Stomach (tissue), 19 donors: ENCODE measurements at regions of chrX and their contacts with region 1.

Region 1: GRCh38 chrX:46561824-46562657 is 11.5 kb upstream of the CHST7 start:
- DNase-seq: peak; percentile 15 to 41
- H3K4me3 ChIP-seq: no peak overlapping the region
- H3K27ac ChIP-seq: no peak overlapping the region
- H3K4me1 ChIP-seq: no peaks in the 10 kb centered on the region
- H3K27me3 ChIP-seq: no peaks in the 10 kb centered on the region
- CTCF ChIP-seq: no peak
- EP300 ChIP-seq: no peak
- POLR2A ChIP-seq: no peak

Region 2: DNA sequence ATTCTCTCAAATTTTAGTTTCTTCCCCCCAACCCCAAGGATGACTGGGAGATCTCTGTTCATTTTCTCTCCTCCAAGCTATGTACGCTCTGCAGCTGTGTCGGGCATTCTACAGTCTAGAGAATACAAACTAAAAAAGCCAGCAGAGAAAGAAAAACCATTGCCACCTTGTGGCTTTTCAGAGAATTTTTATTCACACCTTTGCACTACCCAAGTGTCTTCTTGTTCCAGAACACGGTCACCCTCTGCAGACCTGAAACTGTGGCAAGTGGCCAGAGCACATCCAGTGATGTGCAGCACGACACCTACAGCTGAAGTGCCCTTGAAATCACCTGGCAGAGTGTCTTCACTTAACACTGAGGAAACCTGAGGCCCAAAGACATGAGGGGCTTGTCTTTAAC is 80.1 kb after region 1 on chrX:
- intact Hi-C with region 1: loop called (anchors 10 kb)
- DNase-seq: peak in 1 of 2 donors; percentile 34
- H3K4me3 ChIP-seq: no peak overlapping the region
- H3K27ac ChIP-seq: no peak overlapping the region
- H3K4me1 ChIP-seq: no peaks in the 10 kb centered on the region
- H3K27me3 ChIP-seq: peaks cover 0 to 1% (median 0%) of the 10 kb centered on the region in 3 donors
- CTCF ChIP-seq: peak in 4 of 7 experiments; percentile 12 to 31 (median 21)
- EP300 ChIP-seq: no peak
- POLR2A ChIP-seq: no peak

Region 3: DNA sequence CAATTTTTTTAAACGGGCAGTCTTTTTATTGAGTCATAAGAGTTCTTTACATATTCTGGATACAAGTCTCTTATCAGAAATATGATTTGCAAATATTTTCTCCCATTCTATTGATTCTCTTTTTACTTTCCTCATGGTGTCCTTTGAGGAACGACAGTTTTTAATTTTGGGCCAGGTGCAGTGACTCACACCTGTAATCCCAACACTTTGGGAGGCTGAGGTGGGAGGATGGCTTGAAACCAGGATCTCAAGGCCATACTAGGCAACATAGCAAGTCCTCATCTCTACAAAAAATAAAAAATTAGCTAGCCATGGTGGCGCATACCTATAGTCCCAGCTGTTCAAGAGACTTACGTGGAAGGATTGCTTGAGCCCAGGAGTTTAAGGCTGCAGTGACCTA is 450.1 kb after region 1 on chrX:
- intact Hi-C with region 1: no loop called
- DNase-seq: no peak
- H3K4me3 ChIP-seq: no peak overlapping the region
- H3K27ac ChIP-seq: no peak overlapping the region
- H3K4me1 ChIP-seq: no peaks in the 10 kb centered on the region
- H3K27me3 ChIP-seq: no peaks in the 10 kb centered on the region
- CTCF ChIP-seq: no peak
- EP300 ChIP-seq: no peak
- POLR2A ChIP-seq: no peak